Aorta (tissue), 5 donors: ENCODE measurements at regions of chr12 and their contacts with region 1.

Region 1: GRCh38 chr12:26097046-26097878 is 27.6 kb downstream of the BHLHE41 start:
- DNase-seq: peak; percentile 75 to 82
- ATAC-seq: peak; percentile 95
- H3K4me3 ChIP-seq: no peak overlapping the region
- H3K27ac ChIP-seq: no peak overlapping the region
- H3K4me1 ChIP-seq: no peaks in the 10 kb centered on the region
- H3K27me3 ChIP-seq: no peaks in the 10 kb centered on the region

Region 2: GRCh38 chr12:25436203-25437030 is 660.8 kb before region 1 on chr12:
- intact Hi-C with region 1: loop called in 1 of 2 experiments (anchors 10 kb)
- DNase-seq: no peak
- ATAC-seq: peak; percentile 77
- H3K4me3 ChIP-seq: no peak overlapping the region
- H3K27ac ChIP-seq: no peak overlapping the region
- H3K4me1 ChIP-seq: peaks cover 0 to 2% of the 10 kb centered on the region in 2 donors
- H3K27me3 ChIP-seq: no peaks in the 10 kb centered on the region

Region 3: GRCh38 chr12:25752710-25753309 is 344.5 kb before region 1 on chr12:
- intact Hi-C with region 1: no loop called
- DNase-seq: no peak
- ATAC-seq: no peak
- H3K4me3 ChIP-seq: no peak overlapping the region
- H3K27ac ChIP-seq: no peak overlapping the region
- H3K4me1 ChIP-seq: no peaks in the 10 kb centered on the region
- H3K27me3 ChIP-seq: no peaks in the 10 kb centered on the region

Region 4: GRCh38 chr12:26287671-26288381 is 190.6 kb after region 1 on chr12:
- intact Hi-C with region 1: no loop called
- DNase-seq: peak; percentile 82 to 87
- ATAC-seq: peak; percentile 84
- H3K4me3 ChIP-seq: no peak overlapping the region
- H3K27ac ChIP-seq: peak overlapping the region; percentile 23 to 48
- H3K4me1 ChIP-seq: no peaks in the 10 kb centered on the region
- H3K27me3 ChIP-seq: no peaks in the 10 kb centered on the region

Region 5: GRCh38 chr12:26434299-26435068 is 337.2 kb after region 1 on chr12:
- intact Hi-C with region 1: loop called in 1 of 2 experiments (anchors 10 kb)
- DNase-seq: no peak
- ATAC-seq: no peak
- H3K4me3 ChIP-seq: no peak overlapping the region
- H3K27ac ChIP-seq: no peak overlapping the region
- H3K4me1 ChIP-seq: no peaks in the 10 kb centered on the region
- H3K27me3 ChIP-seq: no peaks in the 10 kb centered on the region